H1 (cell line): ENCODE measurements at regions of chr1 and their contacts with region 1.

Region 1: DNA sequence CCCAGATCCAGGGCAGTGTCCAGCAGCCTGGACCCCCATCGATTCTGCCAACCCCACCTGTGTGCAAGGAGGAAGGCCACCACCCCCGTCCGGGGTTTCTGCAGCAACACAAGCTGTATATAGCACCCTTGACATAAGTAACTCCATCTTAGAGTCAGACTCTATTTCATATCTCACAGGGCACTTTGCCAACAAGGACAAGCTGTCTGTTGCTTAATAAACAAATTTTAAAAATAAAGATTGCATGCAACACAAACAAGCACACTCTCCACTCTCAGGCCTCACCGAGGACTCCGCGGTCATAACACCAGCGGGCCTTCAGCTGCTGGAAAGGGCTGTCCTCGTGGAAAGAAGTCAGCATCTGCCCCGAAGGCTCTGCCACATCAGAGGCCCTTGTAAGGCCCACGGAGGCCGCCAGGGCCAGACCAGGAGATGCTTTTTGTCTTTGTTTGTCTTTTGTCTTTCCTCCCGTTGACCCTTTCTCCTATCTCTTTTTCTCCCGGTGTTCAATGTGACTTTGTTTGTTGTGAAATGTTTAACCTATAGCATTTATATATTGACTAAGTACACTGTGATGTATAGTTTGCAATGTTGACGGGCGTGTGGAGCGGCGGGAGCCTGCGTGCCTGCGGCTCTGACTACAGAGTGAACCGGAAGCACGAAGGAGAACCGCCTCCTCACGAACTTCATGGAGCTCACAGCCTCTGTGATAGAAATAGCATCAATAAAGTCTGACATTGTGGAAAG is 24.2 kb downstream of the MEGF6 start:
- DNase-seq: no peak
- H3K4me3 ChIP-seq: no peak overlapping the region
- H3K27ac ChIP-seq: no peak overlapping the region
- H3K4me1 ChIP-seq: peaks cover 0 to 4% (median 3%) of the 10 kb centered on the region in 4 experiments; a peak in 4 of 7 replicates
- H3K27me3 ChIP-seq: no peaks in the 10 kb centered on the region
- CTCF ChIP-seq: no peak
- EP300 ChIP-seq: no peak
- POLR2A ChIP-seq: no peak
- RAD21 ChIP-seq: no peak

Region 2: DNA sequence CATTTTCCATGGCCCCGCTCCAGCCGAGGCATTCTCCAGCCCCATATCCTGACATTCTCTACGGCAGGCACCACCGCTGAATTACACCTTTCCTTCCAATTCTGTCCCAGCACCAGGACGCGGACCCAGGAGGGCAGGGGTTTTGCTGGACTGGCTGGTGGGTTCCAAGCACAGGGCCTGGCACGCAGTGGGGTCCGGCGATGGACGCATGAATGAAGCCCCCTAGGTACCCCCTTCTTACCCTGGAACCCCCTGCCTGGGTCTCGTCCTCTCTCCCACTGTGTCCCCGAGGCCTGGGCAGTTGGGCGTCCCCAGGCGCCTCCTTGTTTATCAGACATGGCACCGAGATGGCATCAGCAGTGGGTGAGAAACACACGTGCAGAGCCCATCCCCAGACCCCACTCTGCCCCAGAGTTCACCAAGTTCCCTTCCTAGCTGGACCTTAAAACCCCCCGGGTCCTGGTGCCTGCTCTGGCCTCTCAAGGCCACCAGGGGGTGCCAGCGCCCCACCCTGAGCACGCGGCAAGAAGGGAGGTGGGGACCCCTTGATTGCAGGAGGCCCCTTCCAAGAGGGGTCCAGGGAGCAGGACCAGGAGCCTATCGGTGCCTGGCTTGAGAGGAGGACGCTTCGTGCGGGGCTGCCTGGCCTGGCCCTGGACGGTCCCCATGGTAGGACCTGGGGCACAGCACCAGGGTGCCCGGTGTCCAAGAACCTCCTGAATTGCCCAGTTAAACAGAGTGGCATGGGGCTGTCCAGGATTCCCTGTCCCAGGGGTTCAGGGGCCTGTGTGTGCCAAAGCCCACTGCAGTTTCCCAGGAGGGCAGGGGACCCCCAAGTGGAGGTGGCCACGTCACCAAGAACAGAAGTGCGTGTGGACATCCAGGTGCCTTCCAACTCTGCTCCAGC is 21.9 kb before region 1 on chr1:
- CTCF ChIA-PET with region 1: interaction called, 39 read pairs
- POLR2A ChIA-PET with region 1: no interaction called
- DNase-seq: peak; percentile 31 to 87
- H3K4me3 ChIP-seq: no peak overlapping the region
- H3K27ac ChIP-seq: no peak overlapping the region
- H3K4me1 ChIP-seq: no peaks in the 10 kb centered on the region
- H3K27me3 ChIP-seq: no peaks in the 10 kb centered on the region
- CTCF ChIP-seq: peak in 2 of 3 experiments; percentile 95 to 97; a peak in 3 of 4 replicates
- EP300 ChIP-seq: no peak
- POLR2A ChIP-seq: no peak
- RAD21 ChIP-seq: peak; percentile 97 to 98

Region 3: DNA sequence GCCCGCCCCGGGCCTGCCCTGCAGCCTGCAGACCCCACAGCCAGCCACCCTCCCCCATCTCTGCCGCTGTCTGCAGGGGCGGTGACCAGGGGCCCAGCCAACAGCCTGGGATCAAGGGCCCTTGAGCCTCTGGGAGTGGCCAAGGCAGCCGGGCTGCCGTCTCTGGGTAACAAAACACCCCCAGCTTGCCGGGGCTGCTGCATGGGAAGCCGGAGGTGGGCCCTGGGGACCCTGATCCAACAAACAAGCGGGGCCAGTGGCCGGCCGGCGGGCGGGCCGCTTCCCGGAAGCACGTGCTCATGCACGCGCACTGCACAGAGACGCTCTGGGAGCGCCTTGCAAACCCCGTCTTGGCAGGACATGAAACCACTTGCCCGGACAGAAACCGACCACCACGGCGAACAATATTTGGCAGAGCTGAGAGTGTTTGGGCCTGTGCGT is 11.0 kb after region 1 on chr1:
- CTCF ChIA-PET with region 1: interaction called, 34 read pairs
- POLR2A ChIA-PET with region 1: interaction called, 3 read pairs
- DNase-seq: no peak
- H3K4me3 ChIP-seq: no peak overlapping the region
- H3K27ac ChIP-seq: no peak overlapping the region
- H3K4me1 ChIP-seq: peaks cover 0 to 28% (median 20%) of the 10 kb centered on the region in 4 experiments; a peak in 6 of 7 replicates
- H3K27me3 ChIP-seq: no peaks in the 10 kb centered on the region
- CTCF ChIP-seq: no peak
- EP300 ChIP-seq: no peak
- POLR2A ChIP-seq: no peak
- RAD21 ChIP-seq: no peak

Region 4: GRCh38 chr1:3611170-3612019 is 24.3 kb after region 1 on chr1 and contains the start of gene MEGF6:
- CTCF ChIA-PET with region 1: interaction called, 84 read pairs
- POLR2A ChIA-PET with region 1: interaction called, 3 read pairs
- DNase-seq: peak; percentile 84 to 97
- H3K4me3 ChIP-seq: peak within 1 kb of the TSS; percentile 69 to 77 (median 72)
- H3K27ac ChIP-seq: no peak within 1 kb of the TSS
- H3K4me1 ChIP-seq: peaks cover 0 to 37% (median 22%) of the 10 kb centered on the region in 4 experiments; a peak in 6 of 7 replicates
- H3K27me3 ChIP-seq: peaks cover 3 to 16% (median 12%) of the 10 kb centered on the region in 4 experiments
- CTCF ChIP-seq: no peak
- EP300 ChIP-seq: no peak
- POLR2A ChIP-seq: no peak
- RAD21 ChIP-seq: no peak
- total RNA-seq, gene MEGF6: 13.2 and 14.8 TPM in 2 replicates

Region 5: DNA sequence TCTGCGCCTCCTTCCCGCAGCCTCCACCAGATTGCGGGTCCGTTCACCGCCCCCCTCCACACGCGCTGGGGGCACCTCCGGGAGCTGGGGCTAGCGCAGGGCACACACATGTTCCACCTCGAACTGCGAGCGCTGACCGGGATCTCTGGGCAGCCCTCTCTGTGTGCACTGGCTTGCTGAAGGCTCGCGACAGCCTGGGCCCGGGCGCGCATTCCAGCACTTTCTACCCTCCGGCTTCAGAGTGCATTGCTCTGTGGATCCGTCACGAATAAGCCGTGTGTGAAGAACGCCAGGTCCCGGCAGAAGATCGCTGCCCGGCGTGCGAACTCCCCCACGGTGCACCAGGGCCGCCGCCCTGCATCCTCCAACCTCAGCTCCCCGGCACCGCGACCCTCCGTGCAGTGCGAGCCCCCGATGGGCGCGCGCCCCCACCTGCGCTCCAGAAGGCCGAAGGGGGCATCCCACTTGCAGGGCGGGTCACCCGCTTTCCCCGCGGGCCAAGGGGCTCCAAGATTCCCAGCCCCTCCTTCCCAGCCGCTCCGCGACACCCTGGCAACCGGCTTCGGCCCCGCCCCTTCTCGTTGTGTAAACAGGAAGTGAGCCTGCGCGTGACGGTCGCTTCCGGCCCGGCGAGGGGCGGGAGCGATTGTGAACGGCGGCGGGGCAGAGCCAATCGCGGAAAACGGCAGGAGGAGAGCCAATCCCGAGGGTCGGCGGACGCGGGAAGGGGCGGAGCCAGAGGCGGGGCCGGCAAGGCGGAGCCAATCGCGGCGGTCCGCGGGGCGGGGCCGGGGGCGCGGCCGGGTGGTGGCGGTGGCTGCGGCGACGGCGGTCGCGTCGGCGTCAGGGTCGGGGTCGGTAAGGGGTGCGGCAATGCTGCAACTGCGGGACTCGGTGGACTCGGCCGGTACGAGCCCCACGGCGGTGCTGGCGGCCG is 37.4 kb after region 1 on chr1 and contains the start of gene TPRG1L:
- CTCF ChIA-PET with region 1: interaction called, 132 read pairs
- POLR2A ChIA-PET with region 1: no interaction called
- DNase-seq: peak; percentile 82 to 99
- H3K4me3 ChIP-seq: peak within 1 kb of the TSS; percentile 77 to 90 (median 86)
- H3K27ac ChIP-seq: no peak within 1 kb of the TSS
- H3K4me1 ChIP-seq: peaks cover 0 to 12% (median 2%) of the 10 kb centered on the region in 4 experiments; a peak in 6 of 7 replicates
- H3K27me3 ChIP-seq: no peaks in the 10 kb centered on the region
- CTCF ChIP-seq: no peak
- EP300 ChIP-seq: no peak
- POLR2A ChIP-seq: no peak
- RAD21 ChIP-seq: no peak
- total RNA-seq, gene TPRG1L: 21.7 and 22.2 TPM in 2 replicates

Region 6: DNA sequence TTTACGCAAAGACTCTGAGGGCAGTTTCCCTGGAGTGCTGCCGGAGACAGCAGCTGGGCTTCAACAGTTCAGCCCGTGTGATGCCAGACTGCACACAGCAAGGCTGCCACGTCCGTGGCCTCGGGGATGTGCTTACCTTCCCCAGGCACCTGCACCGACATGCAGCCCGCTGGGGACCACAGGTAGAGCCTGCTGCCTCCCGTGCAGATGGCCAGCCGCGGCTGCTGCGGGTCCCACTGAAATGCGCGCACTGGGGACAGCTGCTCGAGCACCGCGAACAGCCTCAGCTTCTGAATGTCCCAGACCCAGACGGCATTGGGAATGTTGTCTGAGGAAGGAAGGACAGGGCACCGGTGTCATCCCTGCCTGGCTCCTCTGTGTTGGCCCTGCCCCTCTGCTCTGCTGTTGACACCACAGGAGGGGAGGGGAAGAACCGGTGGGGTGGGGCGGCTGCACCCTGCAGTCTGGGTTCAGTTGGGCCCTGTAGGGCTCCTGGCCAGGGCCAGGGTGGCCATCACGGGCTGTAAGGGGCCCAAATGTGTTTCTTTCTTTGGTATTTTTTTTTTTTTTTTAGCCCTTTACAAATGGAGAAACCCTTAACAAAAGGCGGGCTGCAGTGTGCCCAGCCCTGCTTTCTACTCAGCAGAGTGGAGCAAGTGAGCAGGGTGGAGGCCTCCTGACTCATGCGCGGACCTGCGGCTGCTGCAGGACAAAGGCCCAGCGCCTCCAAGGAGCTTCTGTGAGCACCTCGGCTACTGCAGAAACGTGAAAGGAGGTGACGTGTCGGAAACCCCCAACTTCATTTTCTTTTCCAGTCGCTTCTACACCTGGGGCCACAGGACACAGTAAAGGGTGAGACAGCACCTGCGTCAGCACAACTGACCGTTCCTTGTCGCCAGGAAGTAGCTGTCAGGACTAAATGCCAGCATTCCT is 44.5 kb after region 1 on chr1:
- CTCF ChIA-PET with region 1: interaction called, 11 read pairs
- POLR2A ChIA-PET with region 1: no interaction called
- DNase-seq: no peak
- H3K4me3 ChIP-seq: no peak overlapping the region
- H3K27ac ChIP-seq: no peak overlapping the region; the same call in 1 of the 2 replicates
- H3K4me1 ChIP-seq: peaks cover 0 to 10% (median 2%) of the 10 kb centered on the region in 4 experiments; a peak in 3 of 7 replicates
- H3K27me3 ChIP-seq: no peaks in the 10 kb centered on the region
- CTCF ChIP-seq: no peak
- EP300 ChIP-seq: no peak
- POLR2A ChIP-seq: no peak
- RAD21 ChIP-seq: no peak